ENCODE measurements at regions of chr10 and their contacts with region 1.

Region 1: DNA sequence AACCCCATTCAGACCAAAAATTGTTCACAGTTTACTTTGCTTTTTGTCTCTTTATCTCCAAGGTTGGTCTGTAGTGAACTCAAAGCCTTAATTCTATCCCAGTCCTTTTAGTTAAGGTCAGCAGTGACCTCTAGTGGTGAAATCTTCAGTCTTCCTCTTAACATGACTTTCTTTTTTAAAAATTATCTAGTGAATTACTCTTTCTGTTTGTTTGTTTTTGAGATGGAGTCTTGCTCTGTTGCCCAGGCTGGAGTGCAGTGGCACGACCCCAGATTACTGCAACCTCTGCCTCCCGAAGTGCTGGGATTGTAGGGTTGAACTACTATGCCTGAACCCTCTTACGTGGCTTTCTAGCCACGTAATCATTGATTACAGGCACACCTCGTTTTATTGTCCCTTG is 25.0 kb downstream of the ZNF487 start:
- DNase-seq: peak; percentile 84
- ATAC-seq: peak; percentile 79
- H3K4me3 ChIP-seq: no peak overlapping the region
- H3K27ac ChIP-seq: no peak overlapping the region
- H3K4me1 ChIP-seq: peaks cover 10% of the 10 kb centered on the region; the same call in 1 of the 2 replicates
- H3K27me3 ChIP-seq: no peaks in the 10 kb centered on the region
- CTCF ChIP-seq: peak; percentile 73
- EP300 ChIP-seq: no peak
- POLR2A ChIP-seq: no peak
- RAD21 ChIP-seq: peak; percentile 49; the same call in 1 of the 2 replicates

Region 2: DNA sequence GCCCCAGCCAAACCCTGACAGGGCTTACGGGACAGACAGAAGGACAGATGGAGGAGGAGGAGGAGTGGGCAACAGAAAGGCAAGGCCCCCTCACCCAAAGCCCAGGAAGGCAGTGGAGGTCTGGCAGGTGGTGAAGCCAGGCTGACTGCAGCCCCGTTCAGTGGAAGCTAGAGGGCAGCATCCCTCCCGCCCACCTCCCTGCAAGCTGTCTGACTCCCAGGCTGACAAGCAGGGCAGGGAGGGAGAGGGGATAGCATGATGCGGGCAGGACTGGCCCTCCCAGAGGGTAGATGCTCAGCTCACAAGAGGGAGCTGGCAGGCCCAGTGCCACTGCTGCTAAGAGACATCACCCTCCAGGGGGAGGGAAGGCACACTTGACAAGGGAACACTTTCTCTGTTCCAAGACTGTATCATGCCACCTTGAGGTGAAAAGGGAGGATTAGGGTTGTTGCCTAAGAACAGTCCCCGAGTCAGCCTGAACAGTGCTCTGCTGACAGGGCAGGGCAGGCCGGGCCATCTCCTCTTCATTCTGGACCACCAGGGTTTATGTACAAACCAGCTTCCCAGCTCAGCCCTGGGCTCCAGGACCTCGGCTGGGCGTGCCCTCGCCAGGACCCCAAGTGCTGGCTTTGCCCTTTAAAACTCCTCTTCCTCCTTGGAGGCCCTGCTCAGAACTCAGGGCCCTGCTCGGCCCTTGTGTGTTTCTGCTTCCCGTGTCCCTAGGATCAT is 256.8 kb before region 1 on chr10:
- CTCF ChIA-PET with region 1: no interaction called
- POLR2A ChIA-PET with region 1: no interaction called
- in situ Hi-C with region 1: no loop called
- intact Hi-C with region 1: loop called (anchors 5 kb)
- DNase-seq: peak; percentile 38
- ATAC-seq: peak; percentile 88
- H3K4me3 ChIP-seq: no peak overlapping the region
- H3K27ac ChIP-seq: no peak overlapping the region
- H3K4me1 ChIP-seq: no peaks in the 10 kb centered on the region
- H3K27me3 ChIP-seq: peaks cover 0 to 4% of the 10 kb centered on the region in 2 experiments; a peak in 2 of 5 replicates
- CTCF ChIP-seq: peak; percentile 88
- EP300 ChIP-seq: no peak
- POLR2A ChIP-seq: no peak
- RAD21 ChIP-seq: peak; percentile 33; the same call in 1 of the 2 replicates

Region 3: DNA sequence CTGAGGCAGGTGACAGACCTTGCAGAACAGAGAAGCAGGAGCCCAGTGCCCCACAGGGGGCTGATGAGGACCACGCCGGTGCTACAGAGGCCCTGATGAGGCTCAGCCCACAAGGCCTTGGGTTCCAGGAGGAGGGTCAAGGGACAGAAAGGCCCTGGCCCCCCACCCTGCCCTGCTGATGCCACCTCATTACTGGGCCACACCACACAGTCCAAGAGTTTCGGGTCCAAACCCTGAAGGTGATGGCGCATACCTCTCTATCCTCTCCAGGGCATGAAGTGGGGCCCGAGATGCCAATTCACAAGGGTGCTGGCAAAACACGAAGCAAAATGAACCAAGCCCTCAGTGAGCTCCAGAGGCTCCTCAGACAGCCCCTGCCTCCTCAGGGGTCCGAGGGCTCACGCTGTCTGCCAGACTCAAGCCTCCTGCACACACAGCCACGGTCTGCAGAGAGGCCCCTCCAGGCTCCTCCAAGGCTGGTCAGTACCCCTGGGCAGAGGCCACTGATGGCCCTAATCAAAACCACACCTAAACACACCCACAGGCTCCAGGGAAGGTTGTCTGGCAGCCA is 227.4 kb before region 1 on chr10:
- CTCF ChIA-PET with region 1: no interaction called
- POLR2A ChIA-PET with region 1: no interaction called
- in situ Hi-C with region 1: no loop called
- intact Hi-C with region 1: no loop called
- DNase-seq: no peak
- ATAC-seq: no peak
- H3K4me3 ChIP-seq: no peak overlapping the region
- H3K27ac ChIP-seq: no peak overlapping the region
- H3K4me1 ChIP-seq: no peaks in the 10 kb centered on the region
- H3K27me3 ChIP-seq: peaks cover 2 to 31% of the 10 kb centered on the region in 2 experiments; a peak in 4 of 5 replicates
- CTCF ChIP-seq: no peak
- EP300 ChIP-seq: no peak
- POLR2A ChIP-seq: no peak
- RAD21 ChIP-seq: no peak

Region 4: GRCh38 chr10:43292755-43293676 is 168.9 kb before region 1 on chr10:
- CTCF ChIA-PET with region 1: interaction called, 14 read pairs
- POLR2A ChIA-PET with region 1: no interaction called
- in situ Hi-C with region 1: loop called (anchors 10 kb)
- intact Hi-C with region 1: loop called (anchors 1 kb)
- DNase-seq: peak; percentile 21
- ATAC-seq: peak; percentile 88
- H3K4me3 ChIP-seq: no peak overlapping the region
- H3K27ac ChIP-seq: no peak overlapping the region
- H3K4me1 ChIP-seq: no peaks in the 10 kb centered on the region
- H3K27me3 ChIP-seq: peaks cover 1 to 17% of the 10 kb centered on the region in 2 experiments; a peak in 3 of 5 replicates
- CTCF ChIP-seq: peak; percentile 88
- EP300 ChIP-seq: no peak
- POLR2A ChIP-seq: no peak
- RAD21 ChIP-seq: peak; percentile 69; the same call in 1 of the 2 replicates

Region 5: GRCh38 chr10:43380610-43381222 is 81.2 kb before region 1 on chr10:
- CTCF ChIA-PET with region 1: interaction called, 16 read pairs
- POLR2A ChIA-PET with region 1: no interaction called
- in situ Hi-C with region 1: no loop called
- intact Hi-C with region 1: no loop called
- DNase-seq: no peak
- ATAC-seq: peak; percentile 14
- H3K4me3 ChIP-seq: no peak overlapping the region
- H3K27ac ChIP-seq: no peak overlapping the region
- H3K4me1 ChIP-seq: peaks cover 48% of the 10 kb centered on the region
- H3K27me3 ChIP-seq: 0 out of 5 replicates have a peak, but pooled peaks cover 0 to 2% of the 10 kb centered on the region in 2 experiments
- CTCF ChIP-seq: no peak
- EP300 ChIP-seq: no peak
- POLR2A ChIP-seq: no peak
- RAD21 ChIP-seq: no peak